ENCODE measurements at regions of chr11 and their contacts with region 1.

Region 1: DNA sequence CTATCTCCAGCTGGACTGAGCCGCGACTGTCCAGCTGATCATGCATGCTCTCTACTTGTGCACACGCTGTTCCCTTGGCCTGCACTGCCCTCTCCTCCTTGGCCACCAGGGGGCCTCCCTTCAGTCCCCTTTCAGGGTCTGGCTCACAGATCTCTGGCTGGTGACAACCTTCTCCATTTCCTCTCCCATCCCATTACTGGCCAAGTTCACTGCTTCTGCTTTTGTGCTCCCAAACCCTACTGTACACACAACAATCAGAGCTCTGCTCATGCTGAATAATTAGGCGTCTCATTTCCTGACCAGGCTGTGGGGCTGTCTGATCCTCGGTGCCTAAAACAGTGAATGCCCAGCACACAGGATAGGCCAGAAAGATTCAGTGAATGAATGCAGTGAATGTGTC is 224.0 kb upstream of the NARS2 start:
- DNase-seq: peak; percentile 93

Region 2: DNA sequence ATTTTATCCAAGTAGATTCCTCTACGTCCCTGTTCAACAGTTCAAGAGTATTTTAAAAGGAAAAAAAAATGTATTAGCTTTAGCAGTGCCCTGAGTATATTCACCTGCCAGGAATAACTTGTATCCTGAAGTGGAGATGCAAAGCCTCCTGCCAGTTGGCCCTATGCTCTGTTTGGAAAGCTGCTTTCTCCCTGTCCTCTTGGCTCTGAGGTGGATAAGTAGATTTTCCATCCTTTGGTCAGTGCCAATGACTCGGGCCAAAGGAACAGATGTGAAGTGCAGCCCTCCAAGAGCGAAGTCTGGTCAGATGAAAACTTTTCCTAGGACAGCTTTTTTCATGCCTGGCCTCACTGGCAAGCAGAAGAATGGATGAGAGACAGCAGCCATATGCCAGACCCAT is 1482.1 kb after region 1 on chr11:
- intact Hi-C with region 1: loop called in 1 of 2 experiments (anchors 5 kb)
- DNase-seq: peak; percentile 47